ENCODE measurements at regions of chr16 and their contacts with region 1.

Region 1: GRCh38 chr16:86563489-86564345 is 2.9 kb upstream of the FOXC2 start:
- DNase-seq: peak; percentile 87 to 92
- H3K4me3 ChIP-seq: peak overlapping the region; percentile 18
- H3K4me1 ChIP-seq: peaks cover 8% of the 10 kb centered on the region
- H3K27me3 ChIP-seq: peaks cover 31% of the 10 kb centered on the region

Region 2: DNA sequence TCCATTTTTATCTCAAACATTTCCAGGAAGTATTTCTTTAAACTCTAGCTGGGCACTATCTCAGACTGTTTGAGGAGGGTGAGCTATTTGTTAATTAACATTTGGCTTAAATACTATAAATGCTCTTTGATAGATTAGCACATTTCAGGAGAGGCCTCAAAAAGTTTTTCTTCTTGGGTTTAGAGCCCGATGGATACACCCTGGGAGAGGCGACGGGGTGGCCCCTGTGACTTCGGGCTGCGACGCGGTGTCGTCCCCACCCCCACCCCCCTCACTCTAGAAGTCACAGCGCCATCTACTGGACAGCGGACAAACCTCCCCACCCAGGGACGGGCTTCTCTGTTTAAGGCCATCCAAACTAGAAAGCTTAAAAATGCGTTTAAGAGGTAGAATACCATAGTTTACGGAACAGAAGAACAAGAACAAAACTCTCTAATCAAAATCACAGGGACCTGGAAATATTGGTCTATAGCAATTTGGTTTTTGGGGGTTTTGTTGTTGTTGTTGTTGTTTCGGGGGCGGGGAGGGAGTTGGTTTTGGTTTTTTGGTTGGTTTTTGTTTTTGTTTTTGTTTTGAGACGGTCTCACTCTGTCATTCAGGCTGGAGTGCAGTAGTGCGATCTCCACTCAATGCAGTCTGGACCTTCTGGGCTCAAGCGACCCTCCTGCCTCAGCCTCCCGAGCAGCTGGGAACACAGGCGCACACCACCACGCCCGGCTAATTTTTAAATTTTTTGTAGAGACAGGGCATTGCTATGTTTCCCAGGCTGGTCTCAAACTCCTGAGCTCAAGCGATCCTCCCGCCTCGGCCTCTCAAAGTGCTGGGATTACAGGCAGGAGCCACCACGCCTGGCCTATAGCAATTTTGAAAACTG is 499.1 kb after region 1 on chr16:
- in situ Hi-C with region 1: loop called (anchors 5 kb)
- DNase-seq: peak; percentile 49 to 86
- H3K4me3 ChIP-seq: no peak overlapping the region
- H3K4me1 ChIP-seq: peaks cover 4% of the 10 kb centered on the region
- H3K27me3 ChIP-seq: no peaks in the 10 kb centered on the region

Region 3: GRCh38 chr16:87288753-87289362 is 725.1 kb after region 1 on chr16:
- in situ Hi-C with region 1: loop called (anchors 10 kb)
- DNase-seq: no peak
- H3K4me3 ChIP-seq: no peak overlapping the region
- H3K4me1 ChIP-seq: no peaks in the 10 kb centered on the region
- H3K27me3 ChIP-seq: no peaks in the 10 kb centered on the region

Measured in HAP-1 (cell line).